ENCODE measurements at regions of chr22 and their contacts with region 1.

Region 1: GRCh38 chr22:45831394-45831793 is 145.6 kb downstream of the WNT7B start:
- DNase-seq: no peak
- H3K4me3 ChIP-seq: no peak overlapping the region
- H3K27ac ChIP-seq: no peak overlapping the region
- H3K27me3 ChIP-seq: no peaks in the 10 kb centered on the region
- CTCF ChIP-seq: peak in 52 of 56 donors; percentile 15 to 62 (median 40)

Region 2: GRCh38 chr22:45329530-45329936 is 501.9 kb before region 1 on chr22:
- intact Hi-C with region 1: no loop called
- DNase-seq: peak; percentile 65 to 87 (median 75)
- H3K4me3 ChIP-seq: no peak overlapping the region
- H3K27ac ChIP-seq: peak overlapping the region in 4 of 59 donors; percentile 3 to 21 (median 14)
- H3K27me3 ChIP-seq: no peaks in the 10 kb centered on the region
- CTCF ChIP-seq: no peak

Region 3: DNA sequence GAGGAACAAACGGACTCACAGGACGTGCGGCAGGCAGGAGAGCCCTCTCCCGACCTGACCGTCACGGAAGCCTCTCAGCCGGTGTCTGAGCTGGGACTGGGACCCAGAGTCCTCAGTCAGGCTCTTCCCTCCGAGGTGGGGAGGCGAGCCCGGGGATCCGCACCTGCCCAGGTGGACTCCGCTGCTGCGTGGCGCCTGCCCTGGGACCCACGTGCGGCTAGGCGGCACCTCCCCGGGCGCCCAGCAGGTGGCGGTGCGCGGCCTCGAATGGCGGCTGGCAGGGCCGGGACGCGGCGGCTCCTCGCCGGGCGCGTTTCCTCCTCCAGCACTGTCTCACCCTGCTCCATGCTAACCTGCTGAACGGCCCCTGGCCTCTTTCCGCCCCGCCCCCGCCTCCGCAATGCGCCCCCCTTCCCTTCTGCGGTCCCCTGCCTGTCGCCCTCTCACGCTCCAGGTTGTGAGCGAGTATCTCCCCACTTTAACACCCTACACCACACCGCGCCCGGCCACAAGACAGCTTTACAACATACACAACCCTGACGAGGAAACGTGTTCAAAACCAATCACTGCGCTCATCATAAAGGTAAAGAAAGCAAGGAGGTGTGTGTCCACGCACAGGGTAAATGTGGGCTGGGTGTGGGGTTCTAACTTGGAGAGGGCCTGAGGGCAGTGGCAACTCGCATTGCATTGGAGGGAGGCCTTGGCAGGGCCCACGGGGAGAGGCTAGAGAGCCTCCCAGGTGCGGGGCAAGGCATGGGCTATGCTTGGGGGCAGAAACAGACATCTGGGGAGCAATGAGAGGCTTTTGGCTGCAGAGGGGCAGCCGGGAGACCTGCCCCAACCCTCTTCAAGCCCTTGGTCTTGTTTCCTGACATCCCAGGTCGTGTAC is 185.6 kb before region 1 on chr22:
- intact Hi-C with region 1: loop called in 1 of 2 experiments (anchors 5 kb)
- DNase-seq: peak in 9 of 10 donors; percentile 42 to 85 (median 62)
- H3K4me3 ChIP-seq: peak overlapping the region in 26 of 59 donors; percentile 2 to 45 (median 25)
- H3K27ac ChIP-seq: no peak overlapping the region
- H3K27me3 ChIP-seq: peaks cover 0 to 19% (median 0%) of the 10 kb centered on the region in 45 donors
- CTCF ChIP-seq: peak; percentile 74 to 99 (median 96)

Region 4: GRCh38 chr22:45671768-45672563 is 159.4 kb before region 1 on chr22 and contains the start of gene ATXN10:
- intact Hi-C with region 1: loop called in 1 of 2 experiments (anchors 10 kb)
- DNase-seq: peak; percentile 53 to 87 (median 66)
- H3K4me3 ChIP-seq: peak within 1 kb of the TSS; percentile 56 to 96 (median 85)
- H3K27ac ChIP-seq: peak within 1 kb of the TSS; percentile 51 to 96 (median 89)
- H3K27me3 ChIP-seq: no peaks in the 10 kb centered on the region
- CTCF ChIP-seq: peak in 1 of 56 donors; percentile 25
- total RNA-seq, gene ATXN10: 180 to 317 (median 244) TPM

Region 5: DNA sequence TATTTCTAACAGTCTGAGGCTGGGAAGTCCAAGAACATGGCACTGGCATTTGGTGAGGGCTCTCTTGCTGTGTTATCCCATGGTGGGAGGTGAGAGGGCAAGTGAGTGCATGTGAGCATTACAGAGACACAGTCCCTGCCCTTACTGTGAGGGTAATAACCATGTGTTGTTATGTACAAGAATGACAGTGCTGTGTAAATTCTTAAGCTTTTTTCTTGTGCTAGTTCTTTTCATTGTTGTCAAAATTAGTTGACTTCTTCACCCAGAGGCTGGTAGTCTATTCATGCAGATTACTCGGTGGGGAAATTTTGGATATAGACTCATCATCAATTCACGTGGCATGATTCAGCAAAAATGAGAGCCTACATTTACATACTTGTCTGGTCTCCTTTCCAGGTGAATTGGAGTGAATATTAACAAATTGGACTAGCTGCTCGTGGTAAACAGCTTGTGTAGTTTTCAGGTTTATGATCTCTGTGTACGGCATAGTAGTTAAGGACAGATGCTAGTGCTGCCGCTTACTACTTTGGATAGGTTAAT is 110.5 kb before region 1 on chr22:
- intact Hi-C with region 1: loop called in 1 of 2 experiments (anchors 10 kb)
- DNase-seq: no peak
- H3K4me3 ChIP-seq: no peak overlapping the region
- H3K27ac ChIP-seq: peak overlapping the region in 1 of 59 donors; percentile 21
- H3K27me3 ChIP-seq: no peaks in the 10 kb centered on the region
- CTCF ChIP-seq: no peak

Region 6: GRCh38 chr22:45799291-45799690 is 32.1 kb before region 1 on chr22:
- intact Hi-C with region 1: no loop called
- DNase-seq: no peak
- H3K4me3 ChIP-seq: no peak overlapping the region
- H3K27ac ChIP-seq: no peak overlapping the region
- H3K27me3 ChIP-seq: no peaks in the 10 kb centered on the region
- CTCF ChIP-seq: no peak

Measured in dorsolateral prefrontal cortex (tissue), 120 donors.